ENCODE measurements at regions of chr15 and their contacts with region 1.

Region 1: DNA sequence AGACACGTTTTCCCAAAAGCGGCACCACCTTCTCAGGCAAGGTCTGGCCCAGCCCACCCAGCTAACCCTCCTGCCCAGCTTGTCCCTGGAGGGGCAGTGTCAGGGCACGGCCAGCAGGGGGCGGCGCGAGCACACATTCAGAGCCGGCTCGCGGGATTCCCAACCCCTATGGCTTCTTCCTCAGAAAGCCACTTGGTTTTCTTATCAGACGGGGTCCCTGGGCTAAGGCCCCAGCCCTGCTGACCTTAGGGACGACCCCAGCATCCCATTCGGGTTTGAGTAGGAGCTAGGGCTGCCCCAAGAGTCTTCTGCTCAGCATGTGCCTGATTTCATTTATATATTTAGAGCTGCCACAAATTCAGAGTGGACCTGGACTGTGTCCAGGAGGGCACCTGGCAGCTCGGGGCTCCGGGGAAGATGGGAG is 14.5 kb downstream of the RLBP1 start:
- DNase-seq: peak; percentile 45 to 83 (median 63)
- ATAC-seq: peak; percentile 92
- H3K4me3 ChIP-seq: no peak overlapping the region
- H3K4me3 Mint-ChIP-seq: no peak overlapping the region
- H3K27ac ChIP-seq: no peak overlapping the region
- H3K27ac Mint-ChIP-seq: no peak overlapping the region
- H3K4me1 ChIP-seq: peaks cover 28% of the 10 kb centered on the region
- H3K4me1 Mint-ChIP-seq: peaks cover 24% of the 10 kb centered on the region
- H3K27me3 ChIP-seq: no peaks in the 10 kb centered on the region
- H3K27me3 Mint-ChIP-seq: no peaks in the 10 kb centered on the region
- CTCF ChIP-seq: peak; percentile 98

Region 2: GRCh38 chr15:89192766-89193165 is 14.2 kb before region 1 on chr15:
- CTCF ChIA-PET with region 1: interaction called, 10 read pairs
- POLR2A ChIA-PET with region 1: no interaction called
- intact Hi-C with region 1: no loop called
- DNase-seq: no peak
- ATAC-seq: no peak
- H3K4me3 ChIP-seq: no peak overlapping the region
- H3K4me3 Mint-ChIP-seq: no peak overlapping the region
- H3K27ac ChIP-seq: no peak overlapping the region
- H3K27ac Mint-ChIP-seq: no peak overlapping the region
- H3K4me1 ChIP-seq: no peaks in the 10 kb centered on the region
- H3K4me1 Mint-ChIP-seq: no peaks in the 10 kb centered on the region
- H3K27me3 ChIP-seq: no peaks in the 10 kb centered on the region
- H3K27me3 Mint-ChIP-seq: no peaks in the 10 kb centered on the region
- CTCF ChIP-seq: no peak

Region 3: GRCh38 chr15:89217499-89218376 is 10.8 kb after region 1 on chr15:
- CTCF ChIA-PET with region 1: interaction called, 10 read pairs
- POLR2A ChIA-PET with region 1: no interaction called
- intact Hi-C with region 1: no loop called
- DNase-seq: no peak
- ATAC-seq: no peak
- H3K4me3 ChIP-seq: no peak overlapping the region
- H3K4me3 Mint-ChIP-seq: no peak overlapping the region
- H3K27ac ChIP-seq: no peak overlapping the region
- H3K27ac Mint-ChIP-seq: no peak overlapping the region
- H3K4me1 ChIP-seq: no peaks in the 10 kb centered on the region
- H3K4me1 Mint-ChIP-seq: no peaks in the 10 kb centered on the region
- H3K27me3 ChIP-seq: no peaks in the 10 kb centered on the region
- H3K27me3 Mint-ChIP-seq: no peaks in the 10 kb centered on the region
- CTCF ChIP-seq: no peak

Region 4: GRCh38 chr15:89243691-89244471 is 37.0 kb after region 1 on chr15 and contains the start of gene FANCI:
- CTCF ChIA-PET with region 1: interaction called, 16 read pairs
- POLR2A ChIA-PET with region 1: no interaction called
- intact Hi-C with region 1: no loop called
- DNase-seq: peak; percentile 92 to 99 (median 96)
- ATAC-seq: peak; percentile 98
- H3K4me3 ChIP-seq: peak within 1 kb of the TSS; percentile 84
- H3K4me3 Mint-ChIP-seq: peak within 1 kb of the TSS; percentile 92
- H3K27ac ChIP-seq: no peak within 1 kb of the TSS
- H3K27ac Mint-ChIP-seq: peak within 1 kb of the TSS; percentile 83
- H3K4me1 ChIP-seq: peaks cover 26% of the 10 kb centered on the region
- H3K4me1 Mint-ChIP-seq: peaks cover 37% of the 10 kb centered on the region
- H3K27me3 ChIP-seq: no peaks in the 10 kb centered on the region
- H3K27me3 Mint-ChIP-seq: no peaks in the 10 kb centered on the region
- CTCF ChIP-seq: no peak
- total RNA-seq, gene FANCI: 6.1 to 7.1 TPM

Region 5: DNA sequence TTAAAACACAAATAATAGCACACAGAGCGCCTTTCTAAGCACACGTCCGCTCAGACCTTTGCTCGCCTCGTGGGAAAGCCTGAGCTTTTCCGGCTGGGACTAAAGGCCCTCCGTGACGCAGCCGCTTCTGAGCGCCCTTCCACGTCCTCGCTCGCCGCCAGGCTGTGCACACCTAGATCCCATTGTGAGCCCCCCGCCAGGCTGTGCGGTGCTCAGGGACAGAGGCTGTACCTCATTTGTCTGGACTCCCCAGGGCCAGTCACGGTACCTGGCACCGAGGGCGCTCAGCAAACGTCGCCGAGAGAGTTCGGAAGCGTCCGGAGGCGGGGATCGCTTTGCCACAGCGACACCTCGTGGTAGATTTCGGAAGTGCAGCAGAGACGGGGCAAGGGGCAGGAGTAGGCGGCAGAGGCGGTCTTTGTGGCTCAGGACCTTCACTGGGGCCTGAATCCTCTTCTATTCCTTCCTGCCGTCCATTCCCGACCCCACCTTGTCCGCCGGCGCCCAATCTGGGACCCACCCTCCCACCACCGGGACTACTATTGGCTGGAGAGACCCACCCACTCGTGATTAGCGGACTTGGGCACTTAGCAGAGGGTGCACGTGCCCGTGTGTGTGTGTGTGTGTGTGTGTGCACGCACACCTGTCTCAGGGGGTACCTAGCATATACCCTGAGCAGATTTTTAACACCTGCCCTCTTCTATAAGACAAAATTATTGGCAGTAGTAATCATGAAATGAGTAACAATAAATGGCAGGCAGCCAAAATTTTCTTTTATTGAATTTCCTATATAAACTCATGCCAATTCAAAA is 223.8 kb after region 1 on chr15:
- CTCF ChIA-PET with region 1: interaction called, 3 read pairs
- POLR2A ChIA-PET with region 1: no interaction called
- intact Hi-C with region 1: loop called in 1 of 2 experiments (anchors 1 kb)
- DNase-seq: peak; percentile 71 to 95 (median 88)
- ATAC-seq: peak; percentile 94
- H3K4me3 ChIP-seq: peak overlapping the region; percentile 56
- H3K4me3 Mint-ChIP-seq: peak overlapping the region; percentile 68
- H3K27ac ChIP-seq: no peak overlapping the region
- H3K27ac Mint-ChIP-seq: no peak overlapping the region
- H3K4me1 ChIP-seq: peaks cover 9% of the 10 kb centered on the region
- H3K4me1 Mint-ChIP-seq: no peaks in the 10 kb centered on the region
- H3K27me3 ChIP-seq: peaks cover 2 to 11% of the 10 kb centered on the region in 2 experiments
- H3K27me3 Mint-ChIP-seq: peaks cover 31% of the 10 kb centered on the region
- CTCF ChIP-seq: peak; percentile 97